Right ventricle myocardium inferior (tissue), 1 donor: ENCODE measurements at regions of chr14 and their contacts with region 1.

Region 1: DNA sequence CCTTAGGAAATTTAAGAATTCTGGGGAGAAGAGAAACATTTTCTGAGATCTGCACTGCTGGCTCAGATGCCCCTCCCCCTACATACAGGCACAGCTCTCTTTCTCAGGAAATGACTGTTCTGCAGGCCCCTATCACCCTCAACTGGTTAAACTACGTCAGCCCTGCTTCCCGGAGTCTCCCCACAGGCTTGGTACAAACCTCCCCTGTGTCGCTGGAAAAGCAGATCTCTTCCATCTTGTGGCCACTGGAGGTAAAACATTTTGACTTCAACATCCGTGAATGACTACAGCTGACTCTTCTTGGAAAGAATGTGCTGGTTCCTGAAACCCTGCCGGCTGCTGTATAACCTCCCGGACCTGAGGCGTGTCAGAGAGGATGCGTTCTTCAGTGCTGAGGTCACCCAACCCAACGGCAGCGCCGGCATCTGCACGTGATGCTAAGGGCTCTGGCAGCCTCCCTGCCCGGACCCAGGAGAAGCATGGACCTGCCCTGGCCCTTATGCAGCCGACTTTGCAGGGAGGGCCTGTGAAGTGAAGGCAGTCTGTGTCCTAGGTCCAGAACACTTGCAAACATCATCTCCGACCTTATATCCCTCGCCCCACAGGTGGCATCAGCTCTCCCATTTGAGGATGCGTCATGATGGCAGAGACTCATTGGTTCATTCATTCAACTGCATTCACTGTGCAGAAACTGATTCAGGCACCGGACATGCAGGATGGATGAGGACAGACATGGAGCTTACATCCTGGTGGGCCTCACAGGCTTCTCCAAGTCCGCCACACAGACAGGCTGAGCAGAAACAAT is 129.3 kb downstream of the GCH1 start:
- DNase-seq: peak; percentile 84
- ATAC-seq: peak; percentile 83

Region 2: GRCh38 chr14:54606178-54606577 is 167.2 kb before region 1 on chr14:
- intact Hi-C with region 1: loop called (anchors 5 kb)
- DNase-seq: peak; percentile 78
- ATAC-seq: peak; percentile 96

Region 3: DNA sequence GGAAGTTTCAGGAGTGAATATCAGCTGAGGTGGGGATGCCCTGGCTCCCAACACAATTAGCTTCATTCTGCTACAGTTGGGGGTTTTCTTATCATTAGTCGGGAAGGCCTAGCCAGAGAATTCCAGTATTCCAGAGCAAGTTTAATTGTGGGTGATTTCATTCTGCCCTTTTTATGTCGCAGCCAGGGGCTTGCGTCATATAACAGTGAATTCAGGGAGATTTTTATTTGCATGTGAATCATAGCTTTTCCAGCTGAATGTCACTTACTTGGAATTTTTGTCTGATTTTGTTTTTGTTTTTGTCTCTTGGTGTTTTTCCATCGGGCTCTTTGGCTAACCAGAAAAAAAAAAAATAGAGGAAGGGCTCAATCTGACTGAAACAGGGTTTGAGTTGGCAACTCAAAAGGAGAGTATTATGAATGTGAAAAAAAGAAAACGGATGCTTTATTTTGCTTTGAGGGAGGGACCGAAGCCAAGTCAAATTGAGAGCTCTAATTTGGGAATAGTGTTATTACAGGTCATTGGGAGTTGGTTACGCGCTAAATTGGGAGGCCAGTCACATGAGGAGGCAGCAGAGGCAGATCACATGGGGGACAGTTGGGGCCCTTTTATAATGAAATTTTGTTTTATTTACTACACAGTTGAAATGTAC is 87.0 kb before region 1 on chr14:
- intact Hi-C with region 1: loop called (anchors 2 kb)
- DNase-seq: no peak
- ATAC-seq: peak; percentile 65

Region 4: DNA sequence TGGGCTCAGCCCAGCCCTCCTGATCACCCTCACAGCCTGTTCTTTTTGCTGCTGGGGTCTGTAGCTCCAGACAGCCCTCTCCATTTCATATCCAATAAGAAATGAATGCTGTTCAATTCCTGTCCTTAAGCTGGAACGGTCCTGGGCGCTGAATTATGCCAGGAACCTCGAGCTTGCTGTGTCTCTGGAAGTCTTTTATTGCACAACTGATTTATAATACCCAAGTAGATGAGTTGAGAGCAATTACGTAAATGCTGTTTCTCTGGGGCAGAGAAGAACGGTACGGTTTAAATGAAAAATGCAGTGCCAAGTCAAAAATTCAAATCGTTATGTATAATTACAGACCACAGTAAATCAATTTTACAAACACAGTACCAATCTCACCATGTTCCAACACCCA is 45.4 kb before region 1 on chr14:
- intact Hi-C with region 1: loop called (anchors 5 kb)
- DNase-seq: no peak
- ATAC-seq: no peak

Region 5: GRCh38 chr14:54805521-54806322 is 32.3 kb after region 1 on chr14:
- intact Hi-C with region 1: loop called (anchors 2 kb)
- DNase-seq: peak; percentile 89
- ATAC-seq: peak; percentile 92

Region 6: DNA sequence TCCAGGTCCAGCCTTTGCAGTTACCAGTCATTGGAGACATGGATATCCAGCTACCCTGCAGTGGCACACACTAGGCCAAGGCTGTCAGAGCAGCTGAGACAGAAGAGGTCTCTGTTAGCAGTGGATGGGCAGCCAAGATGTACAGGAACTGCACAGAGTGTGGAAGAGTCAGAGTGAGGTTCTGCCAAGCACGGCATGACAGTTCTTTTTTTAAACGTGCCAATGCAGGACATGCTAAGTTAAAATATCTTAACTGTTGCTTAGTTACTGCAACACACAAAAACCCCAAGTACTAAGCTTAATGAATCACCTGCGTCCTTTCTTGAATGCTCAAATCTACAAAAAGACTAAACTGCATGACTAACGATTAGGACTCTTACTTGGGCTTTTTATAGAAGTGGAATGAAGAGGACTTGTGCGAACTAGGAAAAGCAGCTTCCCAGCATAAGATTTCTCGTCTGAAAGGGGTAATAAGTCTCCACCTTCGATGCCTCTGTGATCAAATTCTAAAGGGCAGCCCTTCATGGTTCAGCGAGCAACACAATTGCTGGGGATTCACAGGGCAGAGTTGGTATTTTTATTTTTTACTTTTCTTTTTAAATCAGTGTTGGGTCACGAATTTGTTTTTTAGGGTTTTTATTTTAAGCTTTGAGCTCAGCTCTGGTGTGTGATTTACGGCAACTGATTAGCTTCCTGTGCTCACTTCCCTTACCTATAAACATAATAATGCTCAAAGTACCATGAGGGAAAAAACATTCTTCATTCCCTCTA is 298.7 kb after region 1 on chr14:
- intact Hi-C with region 1: no loop called
- DNase-seq: no peak
- ATAC-seq: peak; percentile 95

Region 7: DNA sequence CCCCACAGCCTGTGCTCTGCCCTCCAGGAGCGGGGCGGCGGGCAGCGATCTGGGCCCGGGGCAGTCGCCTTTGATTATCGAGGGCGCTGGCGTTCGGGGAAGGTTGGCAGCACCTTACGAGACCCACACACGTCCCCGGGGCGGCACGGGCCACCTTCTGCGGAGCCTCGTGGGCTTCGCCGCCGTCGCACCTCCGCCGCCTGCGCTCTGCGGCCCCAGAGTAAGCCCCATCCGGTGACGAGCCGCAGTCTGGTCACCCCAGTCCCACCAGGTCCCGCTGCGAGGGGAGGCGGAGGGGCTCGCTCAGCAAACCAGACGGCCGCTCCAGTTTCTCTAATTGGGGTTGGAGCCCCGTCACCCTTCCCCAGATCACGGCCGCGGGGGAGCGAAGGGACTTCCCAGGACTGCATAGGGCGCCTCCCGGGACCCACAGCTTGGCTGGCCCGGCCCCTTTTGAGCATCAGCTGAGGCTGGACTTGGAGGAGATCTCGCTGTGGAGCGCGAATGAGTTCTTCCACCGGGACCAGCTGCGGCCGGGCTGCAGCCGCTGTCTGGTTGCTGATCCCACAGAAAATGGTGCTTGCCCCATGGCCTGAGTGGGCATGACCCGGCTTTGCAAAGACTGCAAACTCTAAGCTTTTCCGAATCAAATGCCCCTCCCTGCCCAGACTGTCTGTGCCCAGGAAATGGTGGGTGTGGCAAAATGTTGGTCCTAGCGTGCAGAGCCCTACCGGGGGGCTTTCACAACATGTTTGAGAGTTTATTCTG is 356.2 kb after region 1 on chr14:
- intact Hi-C with region 1: loop called (anchors 10 kb)
- DNase-seq: peak; percentile 91
- ATAC-seq: peak; percentile 68